ENCODE measurements at regions of chr4 and their contacts with region 1.

Region 1: GRCh38 chr4:6673660-6674499 is 19.8 kb upstream of the S100P start:
- DNase-seq: peak; percentile 97
- CTCF ChIP-seq: no peak

Region 2: GRCh38 chr4:6640292-6641163 is 33.4 kb before region 1 on chr4 and contains the start of gene MRFAP1:
- CTCF ChIA-PET with region 1: interaction called, 3 read pairs
- POLR2A ChIA-PET with region 1: interaction called, 11 read pairs
- DNase-seq: peak; percentile 96
- CTCF ChIP-seq: no peak

Region 3: DNA sequence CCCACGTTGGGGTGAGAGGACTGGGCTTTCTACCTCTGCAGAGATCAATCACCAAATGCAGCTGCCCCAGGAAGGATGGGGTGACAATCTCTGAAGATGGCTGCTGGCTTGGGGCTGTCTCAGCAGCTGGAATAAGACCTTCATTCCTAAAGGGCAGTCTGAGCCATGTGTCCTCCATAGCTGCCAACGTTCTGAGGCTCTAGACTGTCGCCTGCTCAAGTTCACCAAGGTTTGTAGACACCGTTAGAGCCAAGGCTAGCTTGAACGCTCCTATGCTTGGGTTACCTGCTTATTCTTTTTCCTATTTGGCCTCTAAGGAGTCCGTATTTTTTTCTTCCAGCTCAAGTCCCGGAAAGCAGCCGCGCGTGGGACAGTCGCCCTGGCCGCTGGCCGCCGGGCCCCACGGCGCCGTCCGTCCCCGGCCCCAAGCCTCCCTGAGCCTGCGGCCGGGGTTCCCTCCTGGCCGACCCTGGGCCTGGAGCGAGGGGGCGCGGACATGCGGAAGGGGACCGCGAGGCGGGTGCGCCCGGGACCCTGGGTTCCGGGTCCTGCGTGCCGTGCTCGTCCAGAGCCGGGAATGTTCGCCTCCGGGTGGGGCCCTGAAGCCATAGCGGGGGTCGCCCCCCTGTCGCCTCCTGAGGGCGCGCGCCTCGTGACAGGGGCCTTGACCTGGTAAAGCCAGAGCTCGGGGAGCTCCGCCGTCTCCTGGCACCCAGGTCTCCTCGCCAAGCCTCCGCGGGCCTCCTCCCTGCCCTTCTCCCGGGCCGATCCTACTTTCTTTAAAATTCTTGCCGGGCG is 10.1 kb before region 1 on chr4:
- CTCF ChIA-PET with region 1: interaction called, 14 read pairs
- POLR2A ChIA-PET with region 1: interaction called, 3 read pairs
- DNase-seq: no peak
- CTCF ChIP-seq: no peak

Region 4: GRCh38 chr4:6688879-6689505 is 15.1 kb after region 1 on chr4:
- CTCF ChIA-PET with region 1: interaction called, 12 read pairs
- POLR2A ChIA-PET with region 1: interaction called, 3 read pairs
- DNase-seq: peak; percentile 83
- CTCF ChIP-seq: peak; percentile 18

Region 5: DNA sequence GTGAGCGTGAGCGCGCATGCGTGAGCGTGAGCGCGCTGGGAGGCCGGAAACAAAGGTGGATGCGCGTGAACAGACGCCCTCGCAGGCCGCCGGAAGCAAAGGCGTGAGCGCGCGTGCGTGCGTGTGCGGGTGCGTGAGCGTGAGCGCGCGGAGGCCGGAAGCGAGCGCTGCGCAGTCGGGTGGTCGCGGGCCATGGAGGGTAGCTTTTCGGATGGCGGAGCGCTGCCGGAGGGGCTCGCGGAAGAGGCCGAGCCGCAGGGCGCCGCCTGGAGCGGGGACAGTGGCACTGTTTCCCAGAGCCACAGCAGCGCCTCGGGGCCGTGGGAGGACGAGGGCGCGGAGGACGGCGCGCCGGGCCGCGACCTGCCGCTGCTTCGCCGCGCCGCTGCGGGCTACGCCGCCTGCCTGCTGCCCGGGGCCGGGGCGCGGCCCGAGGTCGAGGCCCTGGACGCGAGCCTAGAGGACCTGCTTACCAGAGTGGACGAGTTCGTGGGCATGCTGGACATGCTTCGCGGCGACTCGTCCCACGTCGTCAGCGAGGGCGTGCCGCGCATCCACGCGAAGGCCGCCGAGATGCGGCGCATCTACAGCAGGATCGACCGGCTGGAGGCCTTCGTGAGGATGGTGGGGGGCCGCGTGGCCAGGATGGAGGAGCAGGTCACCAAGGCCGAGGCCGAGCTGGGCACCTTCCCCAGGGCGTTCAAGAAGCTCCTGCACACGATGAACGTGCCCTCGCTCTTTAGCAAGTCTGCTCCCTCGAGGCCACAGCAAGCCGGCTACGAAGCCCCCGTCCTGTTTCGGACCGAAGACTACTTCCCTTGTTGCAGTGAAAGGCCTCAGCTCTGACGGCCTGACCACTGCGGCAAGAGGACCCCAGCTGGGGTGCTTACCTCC is 42.4 kb after region 1 on chr4 and contains the start of gene BLOC1S4:
- CTCF ChIA-PET with region 1: interaction called, 13 read pairs
- POLR2A ChIA-PET with region 1: no interaction called
- DNase-seq: peak; percentile 95
- CTCF ChIP-seq: no peak

Measured in GM10248 (cell line).